Esophagus squamous epithelium (tissue), 5 donors: ENCODE measurements at regions of chr1 and their contacts with region 1.

Region 1: GRCh38 chr1:16055613-16056520 is 12.3 kb downstream of the CLCNKB start:
- DNase-seq: peak; percentile 28
- H3K4me3 ChIP-seq: no peak overlapping the region
- H3K27ac ChIP-seq: no peak overlapping the region
- H3K4me1 ChIP-seq: peaks cover 0 to 10% (median 5%) of the 10 kb centered on the region in 3 donors
- H3K27me3 ChIP-seq: no peaks in the 10 kb centered on the region
- CTCF ChIP-seq: peak; percentile 85 to 98 (median 94)
- POLR2A ChIP-seq: no peak

Region 2: DNA sequence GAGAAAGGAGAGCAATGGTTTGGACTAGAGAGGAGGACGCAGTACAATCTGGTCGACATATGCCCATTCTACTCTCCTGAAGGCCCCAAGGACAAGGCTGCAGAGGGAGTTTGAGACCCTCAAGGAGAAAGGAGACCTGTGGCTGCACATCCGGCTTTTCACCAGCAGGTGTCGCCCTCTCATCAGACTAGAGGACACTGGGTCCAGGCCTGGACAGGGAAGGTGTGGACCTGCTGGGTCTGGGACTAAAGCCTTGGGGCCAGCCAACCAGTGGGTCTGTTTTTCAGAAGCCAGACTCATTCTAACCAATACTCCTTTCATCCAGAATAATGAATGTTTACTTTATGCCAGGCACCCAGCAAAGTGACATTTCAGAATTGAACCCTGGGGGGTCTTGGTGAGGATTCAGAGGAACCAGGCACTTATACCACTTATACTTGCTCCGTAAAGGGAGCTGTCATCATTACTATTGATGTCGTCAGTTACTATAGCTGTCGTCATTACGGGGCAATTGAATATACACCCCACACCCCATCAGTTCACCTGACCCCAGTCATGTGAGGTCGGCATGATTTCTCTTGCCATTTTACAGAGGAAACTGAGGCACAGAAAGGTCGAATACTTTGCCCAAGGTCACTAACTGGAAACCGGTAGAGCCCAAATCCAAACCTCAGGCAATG is 46.7 kb before region 1 on chr1:
- intact Hi-C with region 1: loop called (anchors 10 kb)
- DNase-seq: no peak
- H3K4me3 ChIP-seq: no peak overlapping the region
- H3K27ac ChIP-seq: no peak overlapping the region
- H3K4me1 ChIP-seq: peaks cover 16 to 40% (median 20%) of the 10 kb centered on the region in 3 donors
- H3K27me3 ChIP-seq: no peaks in the 10 kb centered on the region
- CTCF ChIP-seq: peak; percentile 93 to 96 (median 95)
- POLR2A ChIP-seq: no peak

Region 3: GRCh38 chr1:16127676-16128337 is 71.9 kb after region 1 on chr1:
- intact Hi-C with region 1: no loop called
- DNase-seq: no peak
- H3K4me3 ChIP-seq: no peak overlapping the region
- H3K27ac ChIP-seq: peak overlapping the region in 3 of 4 donors; percentile 44 to 79 (median 79)
- H3K4me1 ChIP-seq: peaks cover 6 to 62% (median 29%) of the 10 kb centered on the region in 3 donors
- H3K27me3 ChIP-seq: no peaks in the 10 kb centered on the region
- CTCF ChIP-seq: no peak
- POLR2A ChIP-seq: no peak